Esophagus muscularis mucosa (tissue), 4 donors: ENCODE measurements at regions of chr3 and their contacts with region 1.

Region 1: DNA sequence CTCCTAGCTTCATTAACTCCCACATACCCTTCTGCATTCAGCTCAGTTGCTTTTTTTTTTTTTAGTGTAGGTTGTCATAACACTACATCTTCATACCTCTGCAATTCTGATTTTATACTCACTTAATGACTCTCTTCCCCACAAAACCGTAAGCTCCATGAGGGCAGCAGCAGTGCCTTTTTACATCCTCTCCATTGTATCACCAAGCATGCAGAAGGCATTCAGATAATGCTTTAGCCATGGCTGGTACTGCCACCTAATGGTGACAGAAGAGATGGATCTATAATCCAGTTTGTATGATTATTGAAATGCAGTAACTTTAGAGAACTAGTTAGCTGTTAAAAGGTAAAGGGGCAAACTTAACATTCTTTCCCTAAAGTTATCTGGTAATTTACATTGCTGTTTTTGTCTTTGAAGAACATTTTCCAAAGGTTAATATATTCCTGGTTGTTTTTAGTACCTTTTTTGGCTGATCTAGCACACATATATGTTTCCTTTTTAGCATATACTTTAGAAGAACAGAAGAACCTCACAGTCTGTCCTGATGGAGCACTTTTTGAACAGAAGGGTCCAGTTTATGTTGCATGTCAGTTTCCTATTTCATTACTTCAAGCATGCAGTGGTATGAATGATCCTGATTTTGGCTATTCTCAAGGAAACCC is 36.8 kb downstream of the ATP1B3 start:
- DNase-seq: no peak
- H3K4me3 ChIP-seq: no peak overlapping the region
- H3K27ac ChIP-seq: no peak overlapping the region
- H3K4me1 ChIP-seq: no peaks in the 10 kb centered on the region
- H3K27me3 ChIP-seq: no peaks in the 10 kb centered on the region
- CTCF ChIP-seq: peak; percentile 49 to 67 (median 55)
- EP300 ChIP-seq: no peak
- POLR2A ChIP-seq: no peak

Region 2: DNA sequence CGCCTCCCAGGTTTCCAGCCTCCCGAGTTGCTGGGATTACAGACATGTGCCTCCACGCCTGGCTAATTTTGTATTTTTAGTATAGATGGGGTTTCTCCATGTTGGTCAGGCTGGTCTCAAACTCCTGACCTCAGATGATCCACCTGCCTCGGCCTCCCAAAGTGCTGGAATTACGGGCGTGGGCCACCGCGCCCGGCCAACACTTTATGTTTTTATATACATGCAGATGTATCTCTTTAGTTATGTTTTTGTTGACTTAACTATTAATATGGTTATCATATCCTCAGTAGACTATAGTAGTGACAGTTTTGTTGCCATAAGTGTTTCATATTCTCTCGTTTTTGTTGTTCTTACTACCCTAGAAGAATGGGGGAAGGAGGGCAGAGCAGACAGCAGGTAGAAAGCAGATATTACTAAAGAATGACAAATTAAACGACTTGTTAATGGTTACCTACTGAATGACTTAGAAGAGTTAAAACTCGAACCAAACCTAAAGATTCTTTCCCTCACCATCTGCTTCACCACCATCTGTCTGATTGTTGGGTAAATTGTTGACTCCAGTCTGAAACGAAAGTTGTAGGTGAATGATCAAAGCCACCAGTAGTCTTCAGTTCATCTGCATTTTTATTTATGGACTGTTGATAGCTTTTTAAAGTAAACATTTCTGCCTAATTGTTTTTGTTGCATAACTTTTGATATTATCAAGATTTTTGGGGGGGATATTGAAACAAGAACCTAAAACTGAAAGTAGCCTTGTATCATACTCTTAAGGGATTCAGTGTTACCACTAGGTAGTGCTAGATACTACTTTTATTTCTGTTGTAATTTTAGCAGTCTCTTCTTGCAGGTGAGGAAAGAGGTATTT is 337.2 kb before region 1 on chr3:
- intact Hi-C with region 1: loop called (anchors 10 kb)
- DNase-seq: no peak
- H3K4me3 ChIP-seq: no peak overlapping the region
- H3K27ac ChIP-seq: no peak overlapping the region
- H3K4me1 ChIP-seq: no peaks in the 10 kb centered on the region
- H3K27me3 ChIP-seq: no peaks in the 10 kb centered on the region
- CTCF ChIP-seq: peak; percentile 53 to 67 (median 61)
- EP300 ChIP-seq: no peak
- POLR2A ChIP-seq: no peak

Region 3: GRCh38 chr3:141769221-141769894 is 143.9 kb before region 1 on chr3:
- intact Hi-C with region 1: no loop called
- DNase-seq: no peak
- H3K4me3 ChIP-seq: no peak overlapping the region
- H3K27ac ChIP-seq: no peak overlapping the region
- H3K4me1 ChIP-seq: no peaks in the 10 kb centered on the region
- H3K27me3 ChIP-seq: no peaks in the 10 kb centered on the region
- CTCF ChIP-seq: no peak
- EP300 ChIP-seq: no peak
- POLR2A ChIP-seq: no peak

Region 4: GRCh38 chr3:142028243-142028777 is 115.0 kb after region 1 on chr3:
- intact Hi-C with region 1: no loop called
- DNase-seq: no peak
- H3K4me3 ChIP-seq: peak overlapping the region; percentile 38 to 59 (median 54)
- H3K27ac ChIP-seq: peak overlapping the region in 3 of 4 donors; percentile 9 to 50 (median 25)
- H3K4me1 ChIP-seq: peaks cover 8 to 38% (median 25%) of the 10 kb centered on the region in 4 donors
- H3K27me3 ChIP-seq: no peaks in the 10 kb centered on the region
- CTCF ChIP-seq: peak in 1 of 3 experiments; percentile 25
- EP300 ChIP-seq: no peak
- POLR2A ChIP-seq: no peak